ENCODE measurements at regions of chr6 and their contacts with region 1.

Region 1: DNA sequence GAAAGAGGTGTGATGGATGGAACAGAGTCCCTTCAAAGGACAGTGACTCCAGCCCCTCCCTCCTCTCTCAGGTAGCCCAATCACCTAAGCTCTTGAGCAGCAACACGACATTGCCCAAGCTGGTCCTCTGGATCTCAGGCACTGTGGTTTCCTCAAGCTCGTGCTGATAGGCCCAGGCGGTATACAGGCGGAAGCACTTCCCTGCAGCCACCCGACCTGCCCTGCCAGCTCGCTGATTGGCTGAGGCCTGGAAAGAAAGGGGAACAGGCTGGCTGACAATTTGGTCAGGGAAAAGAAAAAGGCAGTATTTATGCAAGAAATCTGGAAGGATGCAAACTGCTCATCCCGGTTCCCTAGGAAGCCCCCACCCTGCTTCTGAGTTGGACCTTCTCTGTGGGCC is 9.6 kb downstream of the C6orf136 start:
- DNase-seq: no peak
- ATAC-seq: peak in 1 of 2 experiments; percentile 30; a peak in 1 of 6 replicates
- H3K4me3 ChIP-seq: no peak overlapping the region
- H3K27ac ChIP-seq: no peak overlapping the region
- H3K4me1 ChIP-seq: no peaks in the 10 kb centered on the region
- CTCF ChIP-seq: no peak
- EP300 ChIP-seq: no peak
- POLR2A ChIP-seq: no peak
- RAD21 ChIP-seq: no peak

Region 2: GRCh38 chr6:30515932-30516753 is 140.4 kb before region 1 on chr6:
- CTCF ChIA-PET with region 1: no interaction called
- POLR2A ChIA-PET with region 1: no interaction called
- DNase-seq: peak; percentile 79 to 91
- ATAC-seq: peak; percentile 94 to 99
- H3K4me3 ChIP-seq: peak overlapping the region; percentile 47
- H3K27ac ChIP-seq: peak overlapping the region; percentile 77 to 87
- H3K4me1 ChIP-seq: no peaks in the 10 kb centered on the region
- CTCF ChIP-seq: no peak
- EP300 ChIP-seq: no peak
- POLR2A ChIP-seq: no peak
- RAD21 ChIP-seq: no peak

Region 3: GRCh38 chr6:30672445-30673253 is 16.1 kb after region 1 on chr6 and contains the start of gene DHX16:
- CTCF ChIA-PET with region 1: interaction called, 12 read pairs
- POLR2A ChIA-PET with region 1: no interaction called
- DNase-seq: peak; percentile 82 to 97
- ATAC-seq: peak; percentile 89 to 91
- H3K4me3 ChIP-seq: peak within 1 kb of the TSS; percentile 79
- H3K27ac ChIP-seq: peak within 1 kb of the TSS; percentile 78 to 90
- H3K4me1 ChIP-seq: peaks cover 7% of the 10 kb centered on the region; the same call in 1 of the 3 replicates
- CTCF ChIP-seq: peak; percentile 74
- EP300 ChIP-seq: no peak
- POLR2A ChIP-seq: peak; percentile 24
- RAD21 ChIP-seq: peak; percentile 47 to 50; a peak in 4 of 5 replicates
- polyA plus RNA-seq, gene DHX16: 31.3 and 31.6 TPM in 2 replicates

Region 4: GRCh38 chr6:30707281-30707872 is 50.9 kb after region 1 on chr6:
- CTCF ChIA-PET with region 1: no interaction called
- POLR2A ChIA-PET with region 1: no interaction called
- DNase-seq: peak in 1 of 2 experiments; percentile 47
- ATAC-seq: peak; percentile 62 to 65; a peak in 5 of 6 replicates
- H3K4me3 ChIP-seq: no peak overlapping the region
- H3K27ac ChIP-seq: peak overlapping the region; percentile 71 to 82
- H3K4me1 ChIP-seq: peaks cover 37% of the 10 kb centered on the region
- CTCF ChIP-seq: no peak
- EP300 ChIP-seq: no peak
- POLR2A ChIP-seq: no peak
- RAD21 ChIP-seq: no peak